IMR-90 (cell line): ENCODE measurements at regions of chr9 and their contacts with region 1.

Region 1: GRCh38 chr9:90914868-90915483 is 113.4 kb downstream of the SYK start:
- DNase-seq: peak; percentile 76
- ATAC-seq: peak; percentile 96
- H3K4me3 ChIP-seq: no peak overlapping the region
- H3K27ac ChIP-seq: no peak overlapping the region
- H3K4me1 ChIP-seq: peaks cover 2% of the 10 kb centered on the region
- H3K27me3 ChIP-seq: no peaks in the 10 kb centered on the region
- CTCF ChIP-seq: peak; percentile 83
- POLR2A ChIP-seq: no peak
- RAD21 ChIP-seq: peak; percentile 98

Region 2: GRCh38 chr9:91036826-91037510 is 122.0 kb after region 1 on chr9:
- CTCF ChIA-PET with region 1: interaction called, 7 read pairs
- POLR2A ChIA-PET with region 1: no interaction called
- dilution Hi-C with region 1: no loop called
- in situ Hi-C with region 1: no loop called
- intact Hi-C with region 1: loop called (anchors 2 kb)
- DNase-seq: peak; percentile 92
- ATAC-seq: peak; percentile 92
- H3K4me3 ChIP-seq: no peak overlapping the region
- H3K27ac ChIP-seq: peak overlapping the region; percentile 78
- H3K4me1 ChIP-seq: peaks cover 26% of the 10 kb centered on the region
- H3K27me3 ChIP-seq: no peaks in the 10 kb centered on the region
- CTCF ChIP-seq: peak; percentile 82
- POLR2A ChIP-seq: peak; percentile 37; the same call in 1 of the 2 replicates
- RAD21 ChIP-seq: peak; percentile 94

Region 3: GRCh38 chr9:91117959-91118703 is 203.2 kb after region 1 on chr9:
- CTCF ChIA-PET with region 1: no interaction called
- POLR2A ChIA-PET with region 1: no interaction called
- dilution Hi-C with region 1: no loop called
- in situ Hi-C with region 1: no loop called
- intact Hi-C with region 1: loop called (anchors 2 kb)
- DNase-seq: peak; percentile 82
- ATAC-seq: peak; percentile 86
- H3K4me3 ChIP-seq: no peak overlapping the region
- H3K27ac ChIP-seq: peak overlapping the region; percentile 99
- H3K4me1 ChIP-seq: peaks cover 21% of the 10 kb centered on the region
- H3K27me3 ChIP-seq: no peaks in the 10 kb centered on the region
- CTCF ChIP-seq: no peak
- POLR2A ChIP-seq: no peak
- RAD21 ChIP-seq: no peak

Region 4: GRCh38 chr9:91433180-91433579 is 518.2 kb after region 1 on chr9:
- CTCF ChIA-PET with region 1: interaction called, 12 read pairs
- POLR2A ChIA-PET with region 1: no interaction called
- dilution Hi-C with region 1: no loop called
- in situ Hi-C with region 1: no loop called
- intact Hi-C with region 1: no loop called
- DNase-seq: peak; percentile 98
- ATAC-seq: peak; percentile 92
- H3K4me3 ChIP-seq: no peak overlapping the region
- H3K27ac ChIP-seq: no peak overlapping the region
- H3K4me1 ChIP-seq: peaks cover 6% of the 10 kb centered on the region
- H3K27me3 ChIP-seq: no peaks in the 10 kb centered on the region
- CTCF ChIP-seq: peak; percentile 48
- POLR2A ChIP-seq: no peak
- RAD21 ChIP-seq: peak; percentile 72

Region 5: DNA sequence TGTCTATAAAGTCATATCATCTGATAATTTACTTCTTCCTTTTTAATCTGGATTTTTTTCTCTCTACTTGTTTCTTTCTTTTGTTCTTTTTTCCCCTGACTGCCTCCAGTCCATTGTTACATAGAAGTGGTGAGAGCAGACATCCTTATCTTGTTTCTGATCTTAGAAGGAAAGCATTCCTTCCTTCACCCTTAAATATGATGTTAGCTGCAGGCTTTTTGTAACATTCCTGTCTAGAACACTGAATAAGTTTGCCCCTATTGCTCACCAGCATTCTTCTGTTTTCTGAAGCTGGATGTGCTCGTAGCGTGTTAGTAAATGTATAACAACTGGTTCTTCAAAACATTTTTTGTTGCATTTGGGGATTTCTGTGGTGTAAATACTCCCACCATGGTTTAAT is 645.3 kb after region 1 on chr9:
- CTCF ChIA-PET with region 1: no interaction called
- POLR2A ChIA-PET with region 1: no interaction called
- dilution Hi-C with region 1: no loop called
- in situ Hi-C with region 1: no loop called
- intact Hi-C with region 1: loop called (anchors 10 kb)
- DNase-seq: peak; percentile 41
- ATAC-seq: peak; percentile 52
- H3K4me3 ChIP-seq: no peak overlapping the region
- H3K27ac ChIP-seq: no peak overlapping the region
- H3K4me1 ChIP-seq: peaks cover 5% of the 10 kb centered on the region; the same call in 1 of the 2 replicates
- H3K27me3 ChIP-seq: no peaks in the 10 kb centered on the region
- CTCF ChIP-seq: no peak
- POLR2A ChIP-seq: no peak
- RAD21 ChIP-seq: no peak

Region 6: DNA sequence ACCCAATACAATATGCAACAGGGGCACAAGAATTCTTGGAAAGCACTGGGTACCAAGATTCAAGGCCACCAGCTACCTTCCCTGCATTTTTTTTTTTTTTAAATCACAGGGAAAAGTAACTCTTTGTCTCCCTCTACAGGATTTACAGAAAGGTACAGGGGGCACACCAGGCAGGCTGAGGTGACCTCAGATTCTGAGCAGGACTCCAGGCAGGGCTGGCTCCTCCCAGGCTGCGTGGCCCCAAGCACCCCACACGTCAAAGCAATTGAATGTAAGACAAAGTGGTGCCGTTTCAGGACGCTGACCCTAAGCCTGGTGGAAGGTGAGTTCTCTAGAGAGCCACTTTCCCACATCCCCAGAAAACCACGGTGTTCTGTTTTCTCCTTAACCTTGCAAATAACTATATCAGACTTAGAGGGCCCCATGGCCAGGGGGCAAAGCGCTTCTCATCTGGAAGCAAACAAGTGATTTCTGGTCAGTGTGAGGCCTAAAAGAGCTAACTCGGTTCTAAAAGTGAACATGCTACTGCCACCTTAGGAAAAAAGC is 812.4 kb after region 1 on chr9:
- CTCF ChIA-PET with region 1: interaction called, 3 read pairs
- POLR2A ChIA-PET with region 1: no interaction called
- dilution Hi-C with region 1: no loop called
- in situ Hi-C with region 1: loop called (anchors 5 kb)
- intact Hi-C with region 1: loop called (anchors 1 kb)
- DNase-seq: peak; percentile 56
- ATAC-seq: peak; percentile 94
- H3K4me3 ChIP-seq: no peak overlapping the region
- H3K27ac ChIP-seq: no peak overlapping the region
- H3K4me1 ChIP-seq: peaks cover 5% of the 10 kb centered on the region; the same call in 1 of the 2 replicates
- H3K27me3 ChIP-seq: no peaks in the 10 kb centered on the region
- CTCF ChIP-seq: peak; percentile 73
- POLR2A ChIP-seq: no peak
- RAD21 ChIP-seq: peak; percentile 76

Region 7: GRCh38 chr9:91775011-91775707 is 860.2 kb after region 1 on chr9:
- CTCF ChIA-PET with region 1: interaction called, 9 read pairs
- POLR2A ChIA-PET with region 1: no interaction called
- dilution Hi-C with region 1: no loop called
- in situ Hi-C with region 1: no loop called
- intact Hi-C with region 1: loop called (anchors 5 kb)
- DNase-seq: peak; percentile 58
- ATAC-seq: peak; percentile 18
- H3K4me3 ChIP-seq: no peak overlapping the region
- H3K27ac ChIP-seq: no peak overlapping the region
- H3K4me1 ChIP-seq: peaks cover 34% of the 10 kb centered on the region
- H3K27me3 ChIP-seq: no peaks in the 10 kb centered on the region
- CTCF ChIP-seq: peak; percentile 77
- POLR2A ChIP-seq: peak; percentile 41; the same call in 1 of the 2 replicates
- RAD21 ChIP-seq: peak; percentile 94